ENCODE measurements at regions of chr9 and their contacts with region 1.

Region 1: GRCh38 chr9:97615439-97616072 is 17.6 kb downstream of the TSTD2 start:
- DNase-seq: peak; percentile 47 to 74
- H3K4me3 ChIP-seq: no peak overlapping the region
- H3K4me1 ChIP-seq: peaks cover 5% of the 10 kb centered on the region
- H3K27me3 ChIP-seq: no peaks in the 10 kb centered on the region

Region 2: GRCh38 chr9:97468658-97469448 is 146.7 kb before region 1 on chr9:
- in situ Hi-C with region 1: loop called (anchors 10 kb)
- DNase-seq: peak; percentile 28 to 68
- H3K4me3 ChIP-seq: no peak overlapping the region
- H3K4me1 ChIP-seq: no peaks in the 10 kb centered on the region
- H3K27me3 ChIP-seq: no peaks in the 10 kb centered on the region

Region 3: DNA sequence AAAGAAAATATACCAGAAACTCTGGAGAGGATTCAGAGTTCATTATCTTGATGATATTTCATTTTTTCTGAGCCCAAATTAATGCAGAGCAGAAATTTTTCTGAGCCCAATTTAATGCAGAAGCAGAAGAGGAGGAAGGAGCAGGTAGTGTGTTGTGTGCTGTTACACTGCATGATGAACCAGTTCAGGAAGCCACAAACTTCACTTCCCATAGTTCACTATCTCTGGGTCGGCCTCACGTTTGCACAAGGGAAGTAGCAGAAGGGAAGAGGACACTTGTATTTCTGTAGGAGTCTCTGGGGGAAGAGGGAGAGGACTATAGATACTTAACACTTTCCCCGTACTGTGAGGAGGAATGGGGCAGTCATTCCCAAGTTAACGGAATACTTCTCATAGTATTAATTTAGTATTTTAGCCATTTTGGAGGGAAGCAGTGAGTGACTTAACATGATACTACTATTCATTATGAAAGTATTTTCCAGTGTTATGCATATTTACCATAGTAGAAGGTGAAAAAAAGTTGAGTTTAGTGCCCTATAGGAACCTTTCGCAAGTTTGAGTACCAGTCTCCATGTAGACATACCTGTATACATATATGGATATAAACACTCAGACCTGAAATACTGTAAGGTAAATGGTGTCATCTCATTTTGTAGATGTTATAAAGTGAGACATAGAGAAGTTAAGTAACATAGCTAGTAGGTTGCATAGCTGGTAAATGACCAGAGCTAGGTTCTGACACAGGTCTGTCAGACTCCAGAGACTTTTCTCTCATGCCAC is 51.5 kb after region 1 on chr9:
- in situ Hi-C with region 1: no loop called
- DNase-seq: no peak
- H3K4me3 ChIP-seq: no peak overlapping the region
- H3K4me1 ChIP-seq: no peaks in the 10 kb centered on the region
- H3K27me3 ChIP-seq: no peaks in the 10 kb centered on the region

Measured in HAP-1 (cell line).